ENCODE measurements at regions of chr9 and their contacts with region 1.

Region 1: DNA sequence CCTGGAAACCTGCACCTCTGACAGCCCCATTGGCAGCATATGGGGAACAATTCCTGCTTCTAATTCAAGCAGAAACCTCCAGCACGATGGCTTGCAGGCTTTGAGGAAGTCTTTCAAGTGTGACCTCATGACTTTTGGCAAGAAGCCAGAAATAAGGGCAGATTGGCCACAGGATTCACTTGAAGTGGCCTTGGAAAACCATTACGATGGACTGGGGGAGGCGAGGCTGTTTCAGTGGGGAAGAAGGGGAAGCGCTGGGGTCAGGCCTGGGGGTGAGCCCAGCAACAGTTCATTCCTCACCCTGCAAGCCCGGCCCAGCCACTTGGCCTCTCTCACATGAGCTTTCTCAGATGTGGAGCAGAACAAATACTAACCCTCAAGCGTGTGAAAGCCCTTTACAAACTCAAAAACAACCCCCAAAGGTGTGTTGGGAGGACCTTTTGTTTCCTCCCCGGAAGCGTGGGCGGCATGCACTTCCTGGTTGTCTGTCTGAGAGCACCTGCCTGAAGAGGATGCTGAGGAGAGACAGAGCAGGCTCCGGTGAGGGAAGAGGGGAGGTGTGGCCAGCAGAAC is 26.9 kb upstream of the EEIG1 start:
- DNase-seq: peak; percentile 82 to 98
- H3K4me3 ChIP-seq: no peak overlapping the region
- H3K27ac ChIP-seq: peak overlapping the region; percentile 96
- H3K4me1 ChIP-seq: peaks cover 57% of the 10 kb centered on the region
- H3K27me3 ChIP-seq: no peaks in the 10 kb centered on the region
- CTCF ChIP-seq: no peak

Region 2: GRCh38 chr9:127955294-127956035 is 52.2 kb before region 1 on chr9:
- CTCF ChIA-PET with region 1: no interaction called
- POLR2A ChIA-PET with region 1: interaction called, 3 read pairs
- intact Hi-C with region 1: loop called (anchors 2 kb)
- DNase-seq: peak; percentile 96 to 97
- H3K4me3 ChIP-seq: peak overlapping the region; percentile 10; the same call in 1 of the 2 replicates
- H3K27ac ChIP-seq: peak overlapping the region; percentile 82
- H3K4me1 ChIP-seq: peaks cover 60% of the 10 kb centered on the region
- H3K27me3 ChIP-seq: no peaks in the 10 kb centered on the region
- CTCF ChIP-seq: peak; percentile 68

Region 3: DNA sequence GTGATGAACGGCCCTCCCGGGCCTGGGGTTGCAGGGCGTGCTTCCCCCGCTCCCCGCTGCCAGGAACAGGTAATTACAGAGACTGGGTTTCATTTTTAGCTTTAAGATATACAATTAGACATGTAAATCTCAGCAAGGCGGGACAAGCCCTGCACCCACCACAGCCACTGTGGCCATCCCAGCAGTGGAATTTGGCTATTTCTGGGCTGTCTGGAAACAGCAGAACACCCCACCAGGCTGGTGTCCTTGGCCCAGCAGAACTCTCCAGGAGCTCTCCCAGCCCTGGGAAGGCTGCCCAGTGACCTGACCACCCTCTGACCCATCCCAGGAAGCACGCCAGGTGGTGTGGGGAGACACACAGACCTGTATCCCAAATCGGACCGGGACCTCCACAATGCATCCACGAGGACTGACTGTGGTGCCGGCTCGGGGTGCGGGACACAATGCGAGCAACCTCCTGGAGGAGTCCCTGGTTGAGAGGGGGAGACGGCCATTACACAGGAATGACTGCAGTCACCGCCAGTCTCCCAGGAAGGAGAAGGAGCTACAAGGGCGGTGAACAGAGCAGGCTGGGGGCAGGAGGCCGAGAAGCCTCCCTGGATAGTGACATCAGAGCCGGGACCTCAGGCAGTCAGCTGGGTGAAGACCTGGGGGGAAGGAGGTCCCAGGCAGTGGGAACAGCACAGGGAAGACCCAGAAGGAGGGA is 44.1 kb before region 1 on chr9:
- CTCF ChIA-PET with region 1: no interaction called
- POLR2A ChIA-PET with region 1: interaction called, 17 read pairs
- intact Hi-C with region 1: loop called (anchors 1 kb)
- DNase-seq: no peak
- H3K4me3 ChIP-seq: no peak overlapping the region
- H3K27ac ChIP-seq: peak overlapping the region; percentile 14; the same call in 1 of the 2 replicates
- H3K4me1 ChIP-seq: peaks cover 82% of the 10 kb centered on the region
- H3K27me3 ChIP-seq: no peaks in the 10 kb centered on the region
- CTCF ChIP-seq: no peak

Region 4: DNA sequence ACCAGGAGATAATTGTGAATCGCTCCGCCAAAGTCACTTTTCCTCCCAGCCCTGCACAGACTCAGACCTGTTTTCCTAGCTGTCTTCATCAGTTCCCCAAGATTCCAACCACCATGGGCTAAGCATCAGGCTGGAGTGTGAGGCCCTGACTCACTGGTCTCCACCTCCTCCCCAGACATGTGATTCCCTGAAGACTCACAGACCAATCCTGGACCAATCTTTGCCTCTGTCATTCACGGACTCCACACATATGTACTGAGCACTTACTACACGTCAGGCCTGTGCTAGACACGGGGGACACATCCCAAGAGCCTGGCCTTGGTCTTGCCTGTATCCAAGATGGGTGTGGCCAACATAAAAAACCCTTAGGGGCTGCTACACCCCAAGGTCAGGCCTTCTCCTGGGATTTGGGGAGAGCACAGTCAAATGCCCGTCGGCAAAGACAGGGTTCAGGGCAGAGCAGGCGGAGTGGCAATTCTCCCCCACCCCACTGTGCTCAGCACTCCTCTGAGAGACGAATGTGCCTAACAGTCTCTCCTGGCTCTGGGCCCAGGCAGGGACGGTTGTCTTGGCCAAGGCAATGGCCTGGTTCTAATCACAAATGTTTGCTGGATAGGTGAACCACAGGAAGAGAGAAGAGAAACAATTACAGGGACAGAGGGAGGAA is 38.8 kb before region 1 on chr9:
- CTCF ChIA-PET with region 1: no interaction called
- POLR2A ChIA-PET with region 1: no interaction called
- intact Hi-C with region 1: loop called (anchors 1 kb)
- DNase-seq: peak; percentile 66 to 72
- H3K4me3 ChIP-seq: no peak overlapping the region
- H3K27ac ChIP-seq: peak overlapping the region; percentile 81
- H3K4me1 ChIP-seq: peaks cover 96% of the 10 kb centered on the region
- H3K27me3 ChIP-seq: no peaks in the 10 kb centered on the region
- CTCF ChIP-seq: no peak

Region 5: DNA sequence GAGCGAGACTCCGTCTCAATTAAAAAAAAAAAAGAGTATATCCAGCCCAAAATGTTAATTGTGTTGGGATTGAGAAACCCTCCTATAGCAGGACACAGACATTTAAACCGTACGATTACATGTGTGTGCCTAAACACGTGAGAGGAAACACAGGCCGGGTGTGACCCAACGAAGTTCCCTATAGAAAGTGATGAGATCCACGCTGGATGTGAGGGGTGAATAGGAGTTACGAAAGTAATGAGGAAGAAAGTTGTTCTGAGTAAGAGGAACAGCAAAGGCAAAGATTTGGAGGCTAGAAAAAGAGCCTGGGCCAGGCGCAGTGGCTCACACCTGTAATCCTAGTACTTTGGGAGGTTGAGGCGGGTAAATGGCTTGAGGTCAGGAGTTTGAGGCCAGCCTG is 45.9 kb after region 1 on chr9:
- CTCF ChIA-PET with region 1: interaction called, 9 read pairs
- POLR2A ChIA-PET with region 1: interaction called, 25 read pairs
- intact Hi-C with region 1: no loop called
- DNase-seq: no peak
- H3K4me3 ChIP-seq: no peak overlapping the region
- H3K27ac ChIP-seq: no peak overlapping the region
- H3K4me1 ChIP-seq: peaks cover 32% of the 10 kb centered on the region
- H3K27me3 ChIP-seq: no peaks in the 10 kb centered on the region
- CTCF ChIP-seq: no peak